ENCODE measurements at regions of chr7 and their contacts with region 1.

Region 1: GRCh38 chr7:138842111-138842510 is 44.1 kb upstream of the ATP6V0A4 start:
- DNase-seq: no peak
- ATAC-seq: no peak
- H3K4me3 ChIP-seq: no peak overlapping the region
- H3K4me3 Mint-ChIP-seq: no peak overlapping the region
- H3K27ac ChIP-seq: no peak overlapping the region
- H3K27ac Mint-ChIP-seq: no peak overlapping the region
- H3K4me1 ChIP-seq: no peaks in the 10 kb centered on the region
- H3K4me1 Mint-ChIP-seq: no peaks in the 10 kb centered on the region
- H3K27me3 ChIP-seq: no peaks in the 10 kb centered on the region
- H3K27me3 Mint-ChIP-seq: peaks cover 6% of the 10 kb centered on the region
- CTCF ChIP-seq: no peak

Region 2: GRCh38 chr7:138776166-138776894 is 65.8 kb before region 1 on chr7:
- CTCF ChIA-PET with region 1: no interaction called
- POLR2A ChIA-PET with region 1: no interaction called
- intact Hi-C with region 1: loop called in 1 of 2 experiments (anchors 5 kb)
- DNase-seq: no peak
- ATAC-seq: no peak
- H3K4me3 ChIP-seq: no peak overlapping the region
- H3K4me3 Mint-ChIP-seq: no peak overlapping the region
- H3K27ac ChIP-seq: no peak overlapping the region
- H3K27ac Mint-ChIP-seq: no peak overlapping the region
- H3K4me1 ChIP-seq: no peaks in the 10 kb centered on the region
- H3K4me1 Mint-ChIP-seq: no peaks in the 10 kb centered on the region
- H3K27me3 ChIP-seq: no peaks in the 10 kb centered on the region
- H3K27me3 Mint-ChIP-seq: no peaks in the 10 kb centered on the region
- CTCF ChIP-seq: no peak

Measured in CD8-positive, alpha-beta T cell (primary cell).